ENCODE measurements at regions of chr3 and their contacts with region 1.

Region 1: GRCh38 chr3:49411968-49412631 is at the starts of genes RHOA and TCTA:
- DNase-seq: peak; percentile 98 to 100
- H3K4me3 ChIP-seq: peak within 1 kb of the TSS; percentile 93
- H3K4me3 Mint-ChIP-seq: peak within 1 kb of the TSS; percentile 88
- H3K27ac Mint-ChIP-seq: peak within 1 kb of the TSS; percentile 94
- H3K4me1 ChIP-seq: peaks cover 25% of the 10 kb centered on the region
- H3K4me1 Mint-ChIP-seq: peaks cover 23% of the 10 kb centered on the region
- H3K27me3 ChIP-seq: no peaks in the 10 kb centered on the region
- H3K27me3 Mint-ChIP-seq: no peaks in the 10 kb centered on the region
- CTCF ChIP-seq: no peak
- total RNA-seq, gene RHOA: 338 and 348 TPM in 2 replicates
- total RNA-seq, gene TCTA: 14.2 and 15.5 TPM in 2 replicates

Region 2: GRCh38 chr3:49358217-49358883 is 53.8 kb before region 1 on chr3 and contains the start of gene GPX1:
- CTCF ChIA-PET with region 1: interaction called, 6 read pairs
- POLR2A ChIA-PET with region 1: interaction called, 4 read pairs
- intact Hi-C with region 1: loop called (anchors 2 kb)
- DNase-seq: peak; percentile 97 to 98
- H3K4me3 ChIP-seq: peak within 1 kb of the TSS; percentile 81
- H3K4me3 Mint-ChIP-seq: peak within 1 kb of the TSS; percentile 96
- H3K27ac Mint-ChIP-seq: peak within 1 kb of the TSS; percentile 97
- H3K4me1 ChIP-seq: peaks cover 13% of the 10 kb centered on the region; the same call in 1 of the 2 replicates
- H3K4me1 Mint-ChIP-seq: peaks cover 6% of the 10 kb centered on the region
- H3K27me3 ChIP-seq: no peaks in the 10 kb centered on the region
- H3K27me3 Mint-ChIP-seq: no peaks in the 10 kb centered on the region
- CTCF ChIP-seq: no peak
- total RNA-seq, gene GPX1: 197 and 201 TPM in 2 replicates

Region 3: DNA sequence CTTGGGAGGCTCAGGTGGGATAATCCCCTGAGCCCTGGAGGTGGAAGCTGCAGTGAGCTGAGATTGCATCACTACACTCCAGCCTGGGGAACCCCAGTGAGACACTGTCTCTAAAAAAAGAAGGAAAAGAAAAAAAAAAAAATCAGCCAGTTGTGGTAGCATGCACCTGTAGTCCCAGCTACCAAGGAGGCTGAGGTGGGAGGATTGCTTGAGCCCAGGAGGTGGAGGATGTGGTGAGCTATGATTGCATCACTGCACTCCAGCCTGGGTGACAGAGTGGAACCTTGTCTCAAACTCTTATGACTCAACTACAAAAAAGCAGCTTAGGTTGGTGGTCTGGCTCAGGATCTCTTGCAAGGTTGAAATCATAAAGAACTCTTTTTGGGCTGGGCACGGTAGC is 34.6 kb before region 1 on chr3:
- CTCF ChIA-PET with region 1: no interaction called
- POLR2A ChIA-PET with region 1: no interaction called
- intact Hi-C with region 1: no loop called
- DNase-seq: no peak
- H3K4me3 ChIP-seq: no peak overlapping the region
- H3K4me3 Mint-ChIP-seq: no peak overlapping the region
- H3K27ac Mint-ChIP-seq: peak overlapping the region; percentile 78
- H3K4me1 ChIP-seq: no peaks in the 10 kb centered on the region
- H3K4me1 Mint-ChIP-seq: peaks cover 7% of the 10 kb centered on the region
- H3K27me3 ChIP-seq: no peaks in the 10 kb centered on the region
- H3K27me3 Mint-ChIP-seq: no peaks in the 10 kb centered on the region
- CTCF ChIP-seq: no peak

Region 4: DNA sequence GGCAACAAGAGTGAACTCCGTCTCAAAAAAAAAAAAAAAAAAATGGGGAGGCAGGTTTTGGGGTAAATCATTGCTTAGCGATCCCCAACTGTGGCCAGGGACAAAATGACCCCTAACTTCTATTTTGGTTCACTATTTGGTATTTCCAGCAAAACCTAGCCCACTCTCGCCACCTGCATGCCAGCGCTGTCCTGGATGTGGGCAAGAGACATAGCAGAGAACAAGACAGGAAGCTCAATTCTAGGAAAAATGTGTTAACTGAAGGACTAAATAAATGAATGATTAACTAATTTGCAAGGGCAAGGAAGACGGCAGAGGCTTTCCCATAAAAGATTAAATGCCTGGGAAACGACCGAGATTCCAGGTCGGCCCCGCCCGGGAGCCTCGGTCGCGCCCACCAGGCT is 16.6 kb after region 1 on chr3:
- CTCF ChIA-PET with region 1: no interaction called
- POLR2A ChIA-PET with region 1: interaction called, 25 read pairs
- intact Hi-C with region 1: loop called (anchors 2 kb)
- DNase-seq: no peak
- H3K4me3 ChIP-seq: peak overlapping the region; percentile 65
- H3K4me3 Mint-ChIP-seq: peak overlapping the region; percentile 76
- H3K27ac Mint-ChIP-seq: peak overlapping the region; percentile 96
- H3K4me1 ChIP-seq: no peaks in the 10 kb centered on the region
- H3K4me1 Mint-ChIP-seq: no peaks in the 10 kb centered on the region
- H3K27me3 ChIP-seq: no peaks in the 10 kb centered on the region
- H3K27me3 Mint-ChIP-seq: no peaks in the 10 kb centered on the region
- CTCF ChIP-seq: no peak

Region 5: GRCh38 chr3:49533786-49534519 is 121.9 kb after region 1 on chr3:
- CTCF ChIA-PET with region 1: no interaction called
- POLR2A ChIA-PET with region 1: no interaction called
- intact Hi-C with region 1: no loop called
- DNase-seq: no peak
- H3K4me3 ChIP-seq: no peak overlapping the region
- H3K4me3 Mint-ChIP-seq: no peak overlapping the region
- H3K27ac Mint-ChIP-seq: no peak overlapping the region
- H3K4me1 ChIP-seq: no peaks in the 10 kb centered on the region
- H3K4me1 Mint-ChIP-seq: peaks cover 5% of the 10 kb centered on the region
- H3K27me3 ChIP-seq: no peaks in the 10 kb centered on the region
- H3K27me3 Mint-ChIP-seq: no peaks in the 10 kb centered on the region
- CTCF ChIP-seq: no peak

Measured in Caco-2 (cell line).